ENCODE measurements at regions of chr22 and their contacts with region 1.

Region 1: GRCh38 chr22:42614312-42615091 is at the start of gene POLDIP3:
- DNase-seq: peak; percentile 99
- ATAC-seq: peak; percentile 66
- H3K4me3 Mint-ChIP-seq: peak within 1 kb of the TSS; percentile 93
- H3K27ac Mint-ChIP-seq: peak within 1 kb of the TSS; percentile 98
- H3K4me1 Mint-ChIP-seq: peaks cover 58% of the 10 kb centered on the region
- H3K27me3 Mint-ChIP-seq: no peaks in the 10 kb centered on the region
- total RNA-seq, gene POLDIP3: 77.2 to 80.6 TPM

Region 2: GRCh38 chr22:42079319-42080251 is 534.9 kb before region 1 on chr22 and contains the start of gene SMDT1:
- CTCF ChIA-PET with region 1: no interaction called
- POLR2A ChIA-PET with region 1: interaction called, 10 read pairs
- DNase-seq: peak; percentile 99
- ATAC-seq: peak; percentile 95
- H3K4me3 Mint-ChIP-seq: peak within 1 kb of the TSS; percentile 92
- H3K27ac Mint-ChIP-seq: peak within 1 kb of the TSS; percentile 92
- H3K4me1 Mint-ChIP-seq: peaks cover 38% of the 10 kb centered on the region
- H3K27me3 Mint-ChIP-seq: no peaks in the 10 kb centered on the region
- total RNA-seq, gene SMDT1: 77.2 to 78.2 TPM

Region 3: GRCh38 chr22:42444077-42444904 is 170.2 kb before region 1 on chr22:
- CTCF ChIA-PET with region 1: interaction called, 4 read pairs
- POLR2A ChIA-PET with region 1: interaction called, 10 read pairs
- DNase-seq: peak; percentile 86
- ATAC-seq: peak; percentile 82
- H3K4me3 Mint-ChIP-seq: peak overlapping the region; percentile 58
- H3K27ac Mint-ChIP-seq: peak overlapping the region; percentile 79
- H3K4me1 Mint-ChIP-seq: peaks cover 31% of the 10 kb centered on the region
- H3K27me3 Mint-ChIP-seq: no peaks in the 10 kb centered on the region

Region 4: DNA sequence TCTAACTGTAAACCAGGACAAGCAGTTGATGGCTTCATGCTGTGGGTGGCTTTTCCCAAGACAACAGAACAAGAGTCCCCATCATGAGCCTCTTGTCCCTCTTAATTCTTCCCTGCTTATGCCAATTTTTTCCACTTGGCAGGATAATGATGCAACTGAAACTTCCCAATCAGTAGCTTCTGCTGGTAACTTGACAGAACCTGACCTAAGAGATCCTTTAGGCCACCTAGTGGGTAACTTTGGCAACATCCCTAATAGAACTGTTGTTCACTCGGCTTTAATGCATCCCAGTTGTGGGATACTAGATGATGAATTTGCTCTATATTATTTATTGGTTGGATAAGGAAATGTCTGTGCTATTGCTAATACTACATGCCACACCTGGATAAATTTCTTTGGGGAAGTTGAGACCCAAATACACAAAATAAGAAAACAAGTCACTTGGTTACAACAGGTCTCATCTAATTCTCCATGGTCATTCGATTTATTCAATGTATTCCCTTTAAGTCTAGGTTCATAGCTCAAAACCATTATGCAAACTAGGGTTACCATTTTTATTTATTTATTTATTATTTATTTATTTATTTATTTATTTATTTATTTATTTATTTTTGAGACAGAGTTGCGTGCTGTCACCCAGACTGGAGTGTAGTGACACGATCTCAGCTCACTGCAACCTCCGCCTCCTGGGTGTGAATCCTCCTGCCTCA is 140.9 kb before region 1 on chr22:
- CTCF ChIA-PET with region 1: no interaction called
- POLR2A ChIA-PET with region 1: no interaction called
- DNase-seq: peak; percentile 39
- ATAC-seq: peak; percentile 71
- H3K4me3 Mint-ChIP-seq: no peak overlapping the region
- H3K27ac Mint-ChIP-seq: no peak overlapping the region
- H3K4me1 Mint-ChIP-seq: peaks cover 9% of the 10 kb centered on the region
- H3K27me3 Mint-ChIP-seq: peaks cover 25% of the 10 kb centered on the region

Region 5: GRCh38 chr22:42581762-42582716 is 32.5 kb before region 1 on chr22:
- CTCF ChIA-PET with region 1: no interaction called
- POLR2A ChIA-PET with region 1: interaction called, 47 read pairs
- DNase-seq: peak; percentile 88
- ATAC-seq: peak; percentile 76
- H3K4me3 Mint-ChIP-seq: peak overlapping the region; percentile 95
- H3K27ac Mint-ChIP-seq: peak overlapping the region; percentile 95
- H3K4me1 Mint-ChIP-seq: peaks cover 14% of the 10 kb centered on the region
- H3K27me3 Mint-ChIP-seq: no peaks in the 10 kb centered on the region

Region 6: GRCh38 chr22:42596336-42596735 is 18.2 kb before region 1 on chr22:
- CTCF ChIA-PET with region 1: interaction called, 4 read pairs
- POLR2A ChIA-PET with region 1: interaction called, 17 read pairs
- DNase-seq: no peak
- ATAC-seq: no peak
- H3K4me3 Mint-ChIP-seq: no peak overlapping the region
- H3K27ac Mint-ChIP-seq: no peak overlapping the region
- H3K4me1 Mint-ChIP-seq: no peaks in the 10 kb centered on the region
- H3K27me3 Mint-ChIP-seq: no peaks in the 10 kb centered on the region

Region 7: GRCh38 chr22:42649246-42650099 is 35.0 kb after region 1 on chr22 and contains the start of gene CYB5R3:
- CTCF ChIA-PET with region 1: no interaction called
- POLR2A ChIA-PET with region 1: interaction called, 52 read pairs
- DNase-seq: peak; percentile 81
- ATAC-seq: peak; percentile 85
- H3K4me3 Mint-ChIP-seq: peak within 1 kb of the TSS; percentile 92
- H3K27ac Mint-ChIP-seq: peak within 1 kb of the TSS; percentile 99
- H3K4me1 Mint-ChIP-seq: peaks cover 22% of the 10 kb centered on the region
- H3K27me3 Mint-ChIP-seq: peaks cover 2% of the 10 kb centered on the region
- total RNA-seq, gene CYB5R3: 87.7 to 91.4 TPM

Region 8: GRCh38 chr22:42780070-42780540 is 165.6 kb after region 1 on chr22:
- CTCF ChIA-PET with region 1: no interaction called
- POLR2A ChIA-PET with region 1: no interaction called
- DNase-seq: peak; percentile 78
- ATAC-seq: peak; percentile 79
- H3K4me3 Mint-ChIP-seq: no peak overlapping the region
- H3K27ac Mint-ChIP-seq: no peak overlapping the region
- H3K4me1 Mint-ChIP-seq: no peaks in the 10 kb centered on the region
- H3K27me3 Mint-ChIP-seq: no peaks in the 10 kb centered on the region

Region 9: GRCh38 chr22:42857845-42858481 is 243.5 kb after region 1 on chr22:
- CTCF ChIA-PET with region 1: no interaction called
- POLR2A ChIA-PET with region 1: interaction called, 11 read pairs
- DNase-seq: no peak
- ATAC-seq: no peak
- H3K4me3 Mint-ChIP-seq: no peak overlapping the region
- H3K27ac Mint-ChIP-seq: peak overlapping the region; percentile 30
- H3K4me1 Mint-ChIP-seq: peaks cover 12% of the 10 kb centered on the region
- H3K27me3 Mint-ChIP-seq: no peaks in the 10 kb centered on the region

Measured in activated CD8-positive, alpha-beta T cell treated with anti-CD3 and anti-CD28 coated beads, Interleukin-2, amount 10 ng/mL, durations not matched to agents 7 days and 5 days (primary cell).